Right lobe of liver (tissue), 6 donors: ENCODE measurements at regions of chr22 and their contacts with region 1.

Region 1: GRCh38 chr22:37817705-37818408 is 5.3 kb upstream of the GALR3 start:
- DNase-seq: peak; percentile 82 to 84 (median 84)
- ATAC-seq: peak; percentile 82 to 86 (median 84)
- H3K4me3 ChIP-seq: peak overlapping the region; percentile 19 to 39 (median 23)
- H3K27ac ChIP-seq: no peak overlapping the region
- H3K4me1 ChIP-seq: peaks cover 0 to 34% (median 20%) of the 10 kb centered on the region in 4 donors
- H3K27me3 ChIP-seq: no peaks in the 10 kb centered on the region
- CTCF ChIP-seq: peak; percentile 95 to 98 (median 96)
- POLR2A ChIP-seq: no peak

Region 2: GRCh38 chr22:37674951-37675929 is 142.6 kb before region 1 on chr22 and contains the start of gene LGALS1:
- intact Hi-C with region 1: no loop called
- DNase-seq: peak; percentile 90 to 95 (median 94)
- ATAC-seq: peak; percentile 69 to 82 (median 76)
- H3K4me3 ChIP-seq: peak within 1 kb of the TSS; percentile 41 to 62 (median 58)
- H3K27ac ChIP-seq: peak within 1 kb of the TSS; percentile 56 to 84 (median 84)
- H3K4me1 ChIP-seq: peaks cover 0 to 30% (median 10%) of the 10 kb centered on the region in 4 donors
- H3K27me3 ChIP-seq: no peaks in the 10 kb centered on the region
- CTCF ChIP-seq: peak in 2 of 4 donors; percentile 5 to 8
- POLR2A ChIP-seq: peak; percentile 42
- total RNA-seq, gene LGALS1: 34.7 to 267 (median 141) TPM

Region 3: DNA sequence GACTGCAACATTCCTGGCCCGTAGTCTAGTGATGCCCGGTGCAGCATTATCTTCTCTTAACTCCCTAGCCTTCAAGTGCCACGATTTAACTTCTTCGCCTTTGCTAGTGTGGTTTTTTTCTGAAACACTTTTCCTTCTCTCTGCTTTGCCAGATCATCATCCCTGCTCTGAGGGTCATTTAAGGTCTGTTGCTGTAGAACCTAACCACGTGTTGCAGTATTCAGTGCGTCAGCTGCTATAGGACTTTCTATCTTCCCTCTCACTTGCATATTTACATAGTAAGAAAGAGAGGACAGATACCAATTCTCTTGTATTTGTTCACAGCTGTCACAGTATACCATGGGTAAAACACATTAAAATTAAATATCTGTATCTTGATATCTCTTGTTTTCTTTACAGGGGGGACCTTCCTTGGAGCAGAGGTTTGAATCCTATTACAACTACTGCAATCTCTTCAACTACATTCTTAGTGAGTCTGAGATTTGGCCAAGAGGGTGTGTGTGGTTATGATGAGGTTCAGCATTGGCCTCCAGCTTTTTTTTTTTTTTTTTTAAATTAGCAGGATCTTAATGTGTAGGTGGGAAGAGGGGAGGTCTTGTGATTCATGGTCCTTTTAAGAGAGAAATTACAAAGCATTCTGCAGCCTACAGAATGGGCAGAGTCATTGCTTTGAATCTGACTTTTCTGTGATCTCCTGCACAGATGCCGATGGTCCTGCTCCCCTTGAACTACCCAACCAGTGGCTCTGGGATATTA is 44.9 kb after region 1 on chr22:
- intact Hi-C with region 1: loop called (anchors 5 kb)
- DNase-seq: no peak
- ATAC-seq: peak in 1 of 4 donors; percentile 11
- H3K4me3 ChIP-seq: no peak overlapping the region
- H3K27ac ChIP-seq: no peak overlapping the region
- H3K4me1 ChIP-seq: peaks cover 0 to 52% (median 21%) of the 10 kb centered on the region in 4 donors
- H3K27me3 ChIP-seq: no peaks in the 10 kb centered on the region
- CTCF ChIP-seq: no peak
- POLR2A ChIP-seq: no peak